IMR-90 (cell line): ENCODE measurements at regions of chr5 and their contacts with region 1.

Region 1: GRCh38 chr5:172714491-172715421 is 56.2 kb downstream of the DUSP1 start:
- DNase-seq: peak; percentile 61
- ATAC-seq: peak; percentile 74
- H3K4me3 ChIP-seq: no peak overlapping the region
- H3K27ac ChIP-seq: peak overlapping the region; percentile 2; the same call in 1 of the 2 replicates
- H3K4me1 ChIP-seq: peaks cover 6% of the 10 kb centered on the region
- H3K27me3 ChIP-seq: no peaks in the 10 kb centered on the region
- CTCF ChIP-seq: peak; percentile 69
- POLR2A ChIP-seq: no peak
- RAD21 ChIP-seq: peak; percentile 64

Region 2: GRCh38 chr5:172692981-172693380 is 21.8 kb before region 1 on chr5:
- CTCF ChIA-PET with region 1: no interaction called
- POLR2A ChIA-PET with region 1: no interaction called
- dilution Hi-C with region 1: no loop called
- in situ Hi-C with region 1: no loop called
- intact Hi-C with region 1: no loop called
- DNase-seq: peak; percentile 35
- ATAC-seq: peak; percentile 6; the same call in 1 of the 2 replicates
- H3K4me3 ChIP-seq: no peak overlapping the region
- H3K27ac ChIP-seq: peak overlapping the region; percentile 28; the same call in 1 of the 2 replicates
- H3K4me1 ChIP-seq: peaks cover 7% of the 10 kb centered on the region; the same call in 1 of the 2 replicates
- H3K27me3 ChIP-seq: no peaks in the 10 kb centered on the region
- CTCF ChIP-seq: no peak
- POLR2A ChIP-seq: no peak
- RAD21 ChIP-seq: no peak

Region 3: GRCh38 chr5:172833686-172834414 is 119.1 kb after region 1 on chr5 and contains the start of gene ERGIC1:
- CTCF ChIA-PET with region 1: interaction called, 4 read pairs
- POLR2A ChIA-PET with region 1: no interaction called
- dilution Hi-C with region 1: no loop called
- in situ Hi-C with region 1: no loop called
- intact Hi-C with region 1: loop called (anchors 10 kb)
- DNase-seq: peak; percentile 78
- ATAC-seq: peak; percentile 92
- H3K4me3 ChIP-seq: peak within 1 kb of the TSS; percentile 96
- H3K27ac ChIP-seq: peak within 1 kb of the TSS; percentile 93
- H3K4me1 ChIP-seq: peaks cover 26% of the 10 kb centered on the region
- H3K27me3 ChIP-seq: no peaks in the 10 kb centered on the region
- CTCF ChIP-seq: no peak
- POLR2A ChIP-seq: peak; percentile 95
- RAD21 ChIP-seq: peak; percentile 19; the same call in 1 of the 2 replicates
- total RNA-seq, gene ERGIC1: 124 and 134 TPM in 2 replicates

Region 4: GRCh38 chr5:172910828-172911627 is 196.3 kb after region 1 on chr5:
- CTCF ChIA-PET with region 1: interaction called, 12 read pairs
- POLR2A ChIA-PET with region 1: no interaction called
- dilution Hi-C with region 1: no loop called
- in situ Hi-C with region 1: no loop called
- intact Hi-C with region 1: loop called (anchors 10 kb)
- DNase-seq: peak; percentile 96
- ATAC-seq: peak; percentile 27
- H3K4me3 ChIP-seq: no peak overlapping the region
- H3K27ac ChIP-seq: peak overlapping the region; percentile 91
- H3K4me1 ChIP-seq: peaks cover 31% of the 10 kb centered on the region
- H3K27me3 ChIP-seq: no peaks in the 10 kb centered on the region
- CTCF ChIP-seq: peak; percentile 53
- POLR2A ChIP-seq: peak; percentile 60
- RAD21 ChIP-seq: peak; percentile 63

Region 5: GRCh38 chr5:173057062-173057924 is 342.5 kb after region 1 on chr5:
- CTCF ChIA-PET with region 1: no interaction called
- POLR2A ChIA-PET with region 1: interaction called, 3 read pairs
- dilution Hi-C with region 1: no loop called
- in situ Hi-C with region 1: no loop called
- intact Hi-C with region 1: loop called (anchors 5 kb)
- DNase-seq: peak; percentile 97
- ATAC-seq: peak; percentile 87
- H3K4me3 ChIP-seq: peak overlapping the region; percentile 97
- H3K27ac ChIP-seq: peak overlapping the region; percentile 90
- H3K4me1 ChIP-seq: no peaks in the 10 kb centered on the region; the same call in 1 of the 2 replicates
- H3K27me3 ChIP-seq: no peaks in the 10 kb centered on the region
- CTCF ChIP-seq: 0 out of 2 replicates have a peak, but pooled peaks have one; percentile 14
- POLR2A ChIP-seq: peak; percentile 38; the same call in 1 of the 2 replicates
- RAD21 ChIP-seq: no peak

Region 6: DNA sequence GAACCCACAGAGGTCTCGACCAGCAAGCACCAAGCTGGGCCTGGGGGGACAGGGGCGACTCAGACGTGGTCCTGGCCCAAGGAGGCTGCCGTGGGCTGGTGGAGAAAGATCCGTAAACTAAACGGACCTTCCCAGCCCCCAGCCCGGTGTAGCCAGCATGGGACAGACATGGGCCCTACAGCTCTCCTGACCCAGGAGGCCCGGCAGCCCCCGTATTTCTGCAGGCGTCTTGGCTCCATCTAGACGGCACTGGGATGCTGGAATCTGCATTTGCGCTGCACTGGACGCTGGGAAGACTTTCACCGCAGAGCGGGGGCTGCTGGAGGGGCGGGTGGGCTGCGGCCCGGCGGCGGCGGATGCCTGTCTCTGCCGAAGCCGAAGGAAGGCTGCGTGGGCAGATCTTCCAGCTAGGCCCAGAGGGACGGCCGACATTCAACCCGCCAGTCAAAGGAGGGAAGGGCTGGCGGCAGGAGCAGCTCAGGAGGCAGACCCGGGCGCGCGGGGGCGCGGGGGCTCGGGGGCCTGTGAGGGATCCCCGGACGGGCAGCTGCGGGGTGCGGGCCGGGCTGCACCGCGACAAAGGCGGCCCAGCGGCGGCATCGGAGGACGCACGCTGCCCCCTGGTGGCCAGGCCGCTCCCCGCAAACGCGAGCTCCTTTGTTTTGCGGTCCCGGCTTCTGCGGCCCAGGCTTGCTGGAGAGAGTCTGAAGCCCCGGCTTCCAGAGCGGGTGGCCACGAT is 1596.9 kb after region 1 on chr5:
- CTCF ChIA-PET with region 1: no interaction called
- POLR2A ChIA-PET with region 1: no interaction called
- dilution Hi-C with region 1: no loop called
- in situ Hi-C with region 1: no loop called
- intact Hi-C with region 1: no loop called
- DNase-seq: peak; percentile 34
- ATAC-seq: peak; percentile 97
- H3K4me3 ChIP-seq: peak overlapping the region; percentile 40
- H3K27ac ChIP-seq: no peak overlapping the region
- H3K4me1 ChIP-seq: peaks cover 2% of the 10 kb centered on the region; the same call in 1 of the 2 replicates
- H3K27me3 ChIP-seq: peaks cover 10% of the 10 kb centered on the region; the same call in 1 of the 2 replicates
- CTCF ChIP-seq: peak; percentile 73
- POLR2A ChIP-seq: no peak
- RAD21 ChIP-seq: peak; percentile 53